ENCODE measurements at regions of chr11 and their contacts with region 1.

Region 1: DNA sequence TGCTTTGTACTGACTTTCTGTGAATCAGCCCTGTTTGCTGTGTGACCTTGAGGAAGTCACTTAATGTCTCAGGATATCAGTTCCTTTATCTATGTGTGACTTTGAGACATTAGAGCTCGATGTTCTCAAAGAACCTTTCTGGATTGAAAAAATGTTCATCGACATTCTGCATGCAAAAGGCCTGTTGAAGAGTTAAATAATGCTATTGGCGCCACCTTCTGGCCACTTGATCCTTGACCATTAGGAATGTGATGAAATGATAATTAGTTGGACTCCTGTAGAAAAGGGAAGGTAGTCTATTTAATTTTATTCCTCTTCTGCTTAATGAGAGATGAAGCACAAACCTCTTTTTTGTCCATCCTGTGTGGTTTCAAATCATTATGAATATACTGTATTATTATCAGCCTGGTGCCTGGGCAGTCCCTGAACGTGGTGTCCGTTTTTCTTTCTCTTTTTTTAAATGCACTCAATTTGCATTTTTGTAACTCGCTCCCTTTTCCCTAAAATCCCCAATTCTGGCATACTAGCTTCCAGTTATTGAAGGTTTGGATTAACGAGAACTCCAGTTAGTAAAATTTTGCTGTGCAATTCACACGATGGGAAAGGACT is 20.7 kb downstream of the ELF5 start:
- DNase-seq: peak in 1 of 2 donors; percentile 63
- ATAC-seq: peak in 1 of 3 donors; percentile 47
- H3K4me3 ChIP-seq: no peak overlapping the region
- H3K4me3 Mint-ChIP-seq: no peak overlapping the region
- H3K27ac ChIP-seq: no peak overlapping the region
- H3K27ac Mint-ChIP-seq: no peak overlapping the region
- H3K4me1 ChIP-seq: no peaks in the 10 kb centered on the region
- H3K4me1 Mint-ChIP-seq: no peaks in the 10 kb centered on the region
- H3K27me3 ChIP-seq: no peaks in the 10 kb centered on the region
- H3K27me3 Mint-ChIP-seq: peaks cover 3 to 10% of the 10 kb centered on the region in 2 donors
- CTCF ChIP-seq: peak; percentile 71

Region 2: GRCh38 chr11:33808228-33808828 is 684.6 kb before region 1 on chr11:
- intact Hi-C with region 1: loop called (anchors 1 kb)
- DNase-seq: peak; percentile 79 to 89
- ATAC-seq: peak; percentile 88 to 97 (median 91)
- H3K4me3 ChIP-seq: no peak overlapping the region
- H3K4me3 Mint-ChIP-seq: no peak overlapping the region
- H3K27ac ChIP-seq: no peak overlapping the region
- H3K27ac Mint-ChIP-seq: no peak overlapping the region
- H3K4me1 ChIP-seq: no peaks in the 10 kb centered on the region
- H3K4me1 Mint-ChIP-seq: peaks cover 5% of the 10 kb centered on the region in 2 donors
- H3K27me3 ChIP-seq: peaks cover 16% of the 10 kb centered on the region
- H3K27me3 Mint-ChIP-seq: peaks cover 22 to 39% of the 10 kb centered on the region in 2 donors
- CTCF ChIP-seq: peak; percentile 89

Region 3: DNA sequence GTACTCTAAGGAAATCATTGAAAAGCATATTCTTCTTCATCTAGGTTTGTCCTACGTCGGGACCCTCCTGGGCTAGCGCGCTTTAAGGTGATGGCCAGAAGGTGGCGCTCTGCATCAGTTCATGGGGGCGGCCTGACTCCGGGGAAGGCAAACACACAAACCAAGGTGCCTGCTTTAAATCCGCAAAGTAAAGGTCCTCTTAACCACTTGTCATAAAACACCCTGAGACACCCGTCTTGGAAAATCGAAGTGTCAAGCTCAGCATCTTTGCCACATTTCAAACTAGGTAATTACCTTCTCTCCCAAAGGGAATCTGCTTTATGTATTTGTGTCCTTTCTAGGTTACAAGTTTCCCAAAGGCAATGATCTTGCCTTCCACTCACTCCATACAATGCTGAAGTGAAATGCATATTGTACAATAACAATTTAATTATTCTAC is 635.0 kb before region 1 on chr11:
- intact Hi-C with region 1: loop called (anchors 2 kb)
- DNase-seq: peak; percentile 65 to 84
- ATAC-seq: peak; percentile 86 to 96 (median 87)
- H3K4me3 ChIP-seq: no peak overlapping the region
- H3K4me3 Mint-ChIP-seq: no peak overlapping the region
- H3K27ac ChIP-seq: no peak overlapping the region
- H3K27ac Mint-ChIP-seq: no peak overlapping the region
- H3K4me1 ChIP-seq: no peaks in the 10 kb centered on the region
- H3K4me1 Mint-ChIP-seq: peaks cover 5 to 6% of the 10 kb centered on the region in 2 donors
- H3K27me3 ChIP-seq: peaks cover 2% of the 10 kb centered on the region
- H3K27me3 Mint-ChIP-seq: peaks cover 50 to 76% of the 10 kb centered on the region in 2 donors
- CTCF ChIP-seq: peak; percentile 87

Region 4: DNA sequence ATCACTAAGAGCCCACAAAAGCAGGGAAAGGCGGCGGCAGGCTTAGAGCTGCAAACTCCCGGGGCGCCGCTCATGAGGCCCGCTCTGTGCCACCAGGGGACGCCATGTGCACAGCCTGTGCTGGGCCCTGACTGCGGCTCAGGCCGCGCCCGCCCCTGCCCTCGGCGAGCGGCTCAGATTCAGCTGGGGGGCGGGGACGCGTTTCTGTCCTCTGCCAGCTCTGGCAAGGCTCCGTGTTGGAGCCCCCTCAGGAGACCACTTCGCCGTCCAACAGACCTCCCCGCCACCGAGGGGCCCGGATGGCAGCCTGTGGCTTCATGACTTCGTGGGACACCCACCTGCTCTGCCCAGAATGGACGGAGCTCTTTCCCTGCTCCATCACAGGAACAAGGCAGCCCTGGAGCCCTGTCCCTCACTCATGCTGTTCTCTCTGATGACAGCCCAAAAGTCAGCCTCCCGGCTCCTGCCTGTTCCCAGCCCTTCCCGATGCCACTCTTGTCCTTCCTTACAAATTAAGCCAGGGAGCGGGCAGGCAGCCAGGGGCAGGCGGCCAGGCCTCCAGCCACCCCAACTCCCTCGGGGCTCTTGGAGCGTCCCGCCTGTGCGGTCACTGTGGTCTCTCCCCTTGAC is 318.4 kb before region 1 on chr11:
- intact Hi-C with region 1: loop called (anchors 1 kb)
- DNase-seq: peak; percentile 77 to 88
- ATAC-seq: peak; percentile 94 to 100 (median 99)
- H3K4me3 ChIP-seq: no peak overlapping the region
- H3K4me3 Mint-ChIP-seq: peak overlapping the region; percentile 73
- H3K27ac ChIP-seq: no peak overlapping the region
- H3K27ac Mint-ChIP-seq: peak overlapping the region in 1 of 2 donors; percentile 13
- H3K4me1 ChIP-seq: peaks cover 11% of the 10 kb centered on the region
- H3K4me1 Mint-ChIP-seq: peaks cover 5 to 14% of the 10 kb centered on the region in 2 donors
- H3K27me3 ChIP-seq: peaks cover 2% of the 10 kb centered on the region
- H3K27me3 Mint-ChIP-seq: no peaks in the 10 kb centered on the region
- CTCF ChIP-seq: peak; percentile 85

Region 5: DNA sequence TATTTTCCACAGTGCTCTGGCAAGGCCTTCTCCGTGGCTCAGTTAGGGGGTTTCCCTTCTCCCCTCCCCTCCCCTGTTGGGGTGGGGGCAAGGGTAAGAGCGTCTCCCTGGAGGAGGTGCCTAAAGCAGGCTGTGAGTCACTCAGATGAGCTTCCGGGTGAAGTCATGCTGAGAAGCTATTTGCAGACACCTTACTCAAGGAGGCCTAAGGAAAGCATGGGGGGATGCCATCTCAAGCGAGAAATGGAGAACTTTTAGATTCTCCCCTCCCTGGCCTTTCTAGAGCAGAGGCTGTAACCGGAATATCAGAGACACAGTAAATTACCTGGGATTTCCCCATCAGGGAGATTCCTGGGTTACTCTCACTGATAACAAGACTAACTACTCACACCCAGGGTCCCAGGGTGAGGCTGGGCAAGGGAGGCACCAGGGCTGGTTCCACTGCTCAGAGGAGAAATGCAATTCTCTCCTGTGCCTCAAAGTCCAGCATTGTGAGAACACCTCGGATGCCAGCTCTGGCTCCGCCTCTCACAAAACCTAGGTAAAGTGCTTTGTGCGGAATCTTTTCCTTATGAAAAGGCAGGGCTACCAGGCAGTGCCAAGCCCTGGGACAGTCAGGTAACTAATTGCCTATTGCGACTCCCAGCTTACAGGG is 258.7 kb before region 1 on chr11:
- intact Hi-C with region 1: no loop called
- DNase-seq: peak; percentile 32 to 89
- ATAC-seq: peak; percentile 75 to 96 (median 95)
- H3K4me3 ChIP-seq: no peak overlapping the region
- H3K4me3 Mint-ChIP-seq: no peak overlapping the region
- H3K27ac ChIP-seq: no peak overlapping the region
- H3K27ac Mint-ChIP-seq: peak overlapping the region in 1 of 2 donors; percentile 24
- H3K4me1 ChIP-seq: peaks cover 8% of the 10 kb centered on the region
- H3K4me1 Mint-ChIP-seq: peaks cover 0 to 4% of the 10 kb centered on the region in 2 donors
- H3K27me3 ChIP-seq: no peaks in the 10 kb centered on the region
- H3K27me3 Mint-ChIP-seq: peaks cover 5% of the 10 kb centered on the region in 2 donors
- CTCF ChIP-seq: no peak

Region 6: DNA sequence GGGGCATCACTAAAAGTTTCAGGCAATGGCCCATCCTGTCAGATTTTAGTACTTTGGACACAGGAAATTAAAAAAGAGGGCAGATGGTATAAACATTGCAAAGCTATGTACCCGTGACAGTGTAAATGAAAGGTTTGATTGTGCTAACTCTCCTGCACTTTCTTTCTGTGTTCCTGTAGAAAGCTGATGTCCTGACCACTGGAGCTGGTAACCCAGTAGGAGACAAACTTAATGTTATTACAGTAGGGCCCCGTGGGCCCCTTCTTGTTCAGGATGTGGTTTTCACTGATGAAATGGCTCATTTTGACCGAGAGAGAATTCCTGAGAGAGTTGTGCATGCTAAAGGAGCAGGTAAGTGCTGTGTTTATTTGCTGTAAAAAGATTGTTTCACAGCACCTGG is 43.9 kb before region 1 on chr11:
- intact Hi-C with region 1: no loop called
- DNase-seq: no peak
- ATAC-seq: peak in 1 of 3 donors; percentile 52
- H3K4me3 ChIP-seq: no peak overlapping the region
- H3K4me3 Mint-ChIP-seq: peak overlapping the region; percentile 14
- H3K27ac ChIP-seq: no peak overlapping the region
- H3K27ac Mint-ChIP-seq: peak overlapping the region; percentile 63 to 68
- H3K4me1 ChIP-seq: peaks cover 11% of the 10 kb centered on the region
- H3K4me1 Mint-ChIP-seq: peaks cover 27 to 44% of the 10 kb centered on the region in 2 donors
- H3K27me3 ChIP-seq: no peaks in the 10 kb centered on the region
- H3K27me3 Mint-ChIP-seq: no peaks in the 10 kb centered on the region
- CTCF ChIP-seq: no peak

Region 7: GRCh38 chr11:34552270-34552669 is 59.4 kb after region 1 on chr11:
- intact Hi-C with region 1: no loop called
- DNase-seq: no peak
- ATAC-seq: no peak
- H3K4me3 ChIP-seq: no peak overlapping the region
- H3K4me3 Mint-ChIP-seq: no peak overlapping the region
- H3K27ac ChIP-seq: no peak overlapping the region
- H3K27ac Mint-ChIP-seq: no peak overlapping the region
- H3K4me1 ChIP-seq: no peaks in the 10 kb centered on the region
- H3K4me1 Mint-ChIP-seq: no peaks in the 10 kb centered on the region
- H3K27me3 ChIP-seq: no peaks in the 10 kb centered on the region
- H3K27me3 Mint-ChIP-seq: peaks cover 11 to 23% of the 10 kb centered on the region in 2 donors
- CTCF ChIP-seq: no peak

Measured in natural killer cell (primary cell).